Activated B cell treated with CpG ODN at 0.5 μM for 24 hours (primary cell): ENCODE measurements at regions of chr9 and their contacts with region 1.

Region 1: DNA sequence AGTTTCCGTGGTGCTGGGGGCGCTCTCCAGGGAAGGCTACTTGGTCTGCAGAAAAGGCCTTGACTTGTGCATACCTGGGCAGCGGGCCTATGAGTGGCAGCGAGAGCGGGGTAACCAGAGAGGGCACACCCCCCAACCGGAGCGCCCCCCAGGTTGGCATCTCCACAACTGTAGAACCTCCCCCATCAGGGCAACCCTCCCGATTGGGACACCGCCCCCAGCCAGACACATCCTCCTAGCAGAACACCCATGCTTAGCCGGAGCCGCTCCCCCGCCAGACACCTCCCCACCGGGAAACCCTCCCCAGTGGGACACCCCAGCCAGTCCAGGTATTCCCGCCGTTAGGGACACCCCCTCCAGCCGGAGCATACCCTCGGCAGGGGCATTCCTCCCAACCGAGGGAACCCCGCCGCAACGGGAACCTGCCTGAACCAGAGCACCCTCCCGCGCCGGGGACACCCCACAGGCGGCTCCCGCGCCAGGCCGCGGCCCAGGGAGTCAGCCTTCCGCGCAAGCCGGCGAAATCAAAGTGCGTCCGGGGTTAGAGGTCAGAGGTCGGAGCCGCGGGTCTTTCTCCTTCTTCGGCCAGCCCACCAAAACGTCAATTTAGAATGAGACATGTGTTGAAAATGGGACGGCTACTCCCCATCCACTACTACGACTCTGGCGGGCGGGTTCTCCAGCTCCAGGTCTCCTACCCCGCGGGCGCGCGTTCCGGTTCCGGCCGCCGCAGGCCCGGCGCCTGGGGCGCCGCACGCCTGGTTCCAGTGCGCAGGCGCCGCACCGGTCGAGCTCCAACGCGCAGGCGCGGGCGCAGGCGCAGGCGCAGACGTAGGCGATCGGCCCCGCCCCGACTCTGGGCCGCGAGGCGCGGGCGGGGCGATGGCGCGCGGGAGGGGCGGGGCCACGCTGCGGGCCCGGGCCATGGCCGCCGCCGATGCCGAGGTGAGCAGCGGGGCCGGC is at the start of gene EHMT1:
- DNase-seq: peak; percentile 98
- ATAC-seq: peak; percentile 89
- H3K4me3 Mint-ChIP-seq: peak within 1 kb of the TSS; percentile 91
- H3K27ac Mint-ChIP-seq: peak within 1 kb of the TSS; percentile 92
- H3K4me1 Mint-ChIP-seq: peaks cover 45% of the 10 kb centered on the region
- H3K27me3 Mint-ChIP-seq: no peaks in the 10 kb centered on the region
- CTCF ChIP-seq: no peak
- total RNA-seq, gene EHMT1: 157 and 163 TPM in 2 replicates

Region 2: DNA sequence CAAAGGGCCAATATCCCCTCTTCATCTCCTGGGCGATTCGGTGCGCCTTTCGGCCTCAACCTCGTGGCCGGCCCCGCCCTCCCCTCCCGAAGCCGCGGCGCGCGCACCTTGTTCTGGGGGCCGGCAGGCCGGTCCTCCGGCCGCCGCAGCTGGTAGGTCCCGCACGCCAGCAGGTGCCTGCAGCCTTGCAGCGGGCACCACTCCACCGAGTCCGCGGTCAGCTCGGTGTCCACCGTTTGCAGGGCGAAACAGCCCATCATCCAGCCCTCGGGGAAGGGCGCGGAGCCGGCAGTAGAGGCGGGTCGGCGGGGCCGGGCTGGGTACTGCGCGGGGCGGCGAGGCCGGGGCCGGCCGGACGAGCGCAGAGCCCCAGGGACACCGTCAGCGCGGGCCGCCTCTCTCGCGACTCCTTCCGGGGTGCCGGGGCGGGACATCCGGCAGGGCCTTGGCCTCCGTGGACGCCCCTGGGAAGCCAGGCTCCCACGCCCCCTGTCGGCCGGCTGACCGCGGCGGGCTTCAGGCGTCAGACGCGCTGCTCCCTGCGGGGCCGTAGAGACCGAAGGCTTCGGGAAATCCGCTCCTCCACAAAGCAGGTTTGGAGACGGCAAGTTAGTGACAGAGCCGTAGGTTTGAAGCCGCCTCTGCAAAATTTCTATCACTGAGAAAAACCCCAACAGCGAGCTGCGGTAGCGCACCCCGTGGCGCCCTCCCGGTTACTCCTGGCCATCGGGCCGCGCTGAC is 39.7 kb before region 1 on chr9 and contains the start of gene DPH7:
- CTCF ChIA-PET with region 1: no interaction called
- POLR2A ChIA-PET with region 1: no interaction called
- intact Hi-C with region 1: loop called (anchors 1 kb)
- DNase-seq: peak; percentile 98
- ATAC-seq: peak; percentile 97
- H3K4me3 Mint-ChIP-seq: peak within 1 kb of the TSS; percentile 82
- H3K27ac Mint-ChIP-seq: peak within 1 kb of the TSS; percentile 35
- H3K4me1 Mint-ChIP-seq: peaks cover 41% of the 10 kb centered on the region
- H3K27me3 Mint-ChIP-seq: no peaks in the 10 kb centered on the region
- CTCF ChIP-seq: peak; percentile 59
- total RNA-seq, gene DPH7: 39.4 and 43.0 TPM in 2 replicates

Region 3: GRCh38 chr9:137632230-137633161 is 14.1 kb after region 1 on chr9:
- CTCF ChIA-PET with region 1: no interaction called
- POLR2A ChIA-PET with region 1: interaction called, 30 read pairs
- intact Hi-C with region 1: loop called (anchors 1 kb)
- DNase-seq: no peak
- ATAC-seq: no peak
- H3K4me3 Mint-ChIP-seq: no peak overlapping the region
- H3K27ac Mint-ChIP-seq: peak overlapping the region; percentile 32
- H3K4me1 Mint-ChIP-seq: peaks cover 61% of the 10 kb centered on the region
- H3K27me3 Mint-ChIP-seq: no peaks in the 10 kb centered on the region
- CTCF ChIP-seq: no peak